Ascending aorta (tissue), 2 donors: ENCODE measurements at regions of chr3 and their contacts with region 1.

Region 1: DNA sequence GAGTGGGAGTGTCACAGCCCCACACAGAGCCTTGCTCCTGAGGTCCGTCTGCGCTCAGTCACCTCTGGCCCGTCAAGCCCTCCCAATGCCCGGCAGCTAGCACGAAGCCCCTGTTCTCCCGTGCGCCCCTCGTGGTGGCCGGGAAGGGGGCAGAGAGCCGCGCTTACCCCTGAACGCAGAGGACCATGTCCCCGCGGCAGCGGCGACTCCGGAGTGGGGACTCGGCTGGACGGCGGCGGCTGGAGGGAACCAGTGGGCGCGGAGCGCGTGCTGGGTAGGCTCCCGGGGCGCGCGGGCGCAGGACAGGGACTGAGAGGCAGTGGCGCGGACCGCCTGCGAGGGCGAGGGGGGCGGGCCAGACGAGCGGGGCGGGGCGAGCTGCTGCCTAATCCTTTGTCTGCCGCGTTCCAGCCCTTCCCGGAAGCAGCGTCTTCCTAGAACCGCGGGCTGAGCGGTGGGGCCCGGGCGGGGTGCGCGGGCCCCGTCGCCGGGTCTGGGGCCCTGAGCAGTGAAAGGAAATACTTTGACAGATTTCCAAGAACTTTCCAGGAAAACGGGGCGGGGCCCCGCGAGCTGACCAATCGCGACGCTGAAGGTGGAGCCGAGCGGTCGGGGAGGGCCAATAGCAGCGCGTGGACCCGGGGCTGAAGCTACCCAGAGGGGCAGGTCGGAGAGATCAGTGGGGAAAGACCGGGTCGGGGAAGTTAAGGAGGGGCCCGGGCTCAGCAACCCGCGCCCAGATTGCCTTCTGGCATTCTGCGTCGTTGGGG is at the start of gene CISH:
- DNase-seq: peak; percentile 80 to 97
- H3K4me3 ChIP-seq: peak within 1 kb of the TSS; percentile 74 to 76
- H3K27ac ChIP-seq: peak within 1 kb of the TSS; percentile 70 to 79
- H3K4me1 ChIP-seq: peaks cover 3 to 18% of the 10 kb centered on the region in 2 donors
- H3K27me3 ChIP-seq: no peaks in the 10 kb centered on the region
- CTCF ChIP-seq: peak in 2 of 3 experiments; percentile 35 to 39
- total RNA-seq, gene CISH: 6.1 TPM

Region 2: GRCh38 chr3:50358911-50359759 is 252.5 kb before region 1 on chr3 and contains the start of gene TMEM115:
- intact Hi-C with region 1: loop called (anchors 5 kb)
- DNase-seq: peak; percentile 96 to 99
- H3K4me3 ChIP-seq: peak within 1 kb of the TSS; percentile 87 to 92
- H3K27ac ChIP-seq: peak within 1 kb of the TSS; percentile 89 to 90
- H3K4me1 ChIP-seq: peaks cover 14 to 33% of the 10 kb centered on the region in 2 donors
- H3K27me3 ChIP-seq: no peaks in the 10 kb centered on the region
- CTCF ChIP-seq: no peak
- total RNA-seq, gene TMEM115: 55.7 TPM

Region 3: GRCh38 chr3:50405249-50405648 is 206.4 kb before region 1 on chr3:
- intact Hi-C with region 1: no loop called
- DNase-seq: no peak
- H3K4me3 ChIP-seq: no peak overlapping the region
- H3K27ac ChIP-seq: no peak overlapping the region
- H3K4me1 ChIP-seq: no peaks in the 10 kb centered on the region
- H3K27me3 ChIP-seq: no peaks in the 10 kb centered on the region
- CTCF ChIP-seq: no peak

Region 4: GRCh38 chr3:50568947-50569749 is 42.5 kb before region 1 on chr3 and contains the start of gene HEMK1:
- intact Hi-C with region 1: loop called (anchors 1 kb)
- DNase-seq: peak; percentile 90 to 99
- H3K4me3 ChIP-seq: peak within 1 kb of the TSS; percentile 74 to 89
- H3K27ac ChIP-seq: peak within 1 kb of the TSS; percentile 75 to 85
- H3K4me1 ChIP-seq: peaks cover 0 to 19% of the 10 kb centered on the region in 2 donors
- H3K27me3 ChIP-seq: no peaks in the 10 kb centered on the region
- CTCF ChIP-seq: no peak
- total RNA-seq, gene HEMK1: 13.1 TPM

Region 5: DNA sequence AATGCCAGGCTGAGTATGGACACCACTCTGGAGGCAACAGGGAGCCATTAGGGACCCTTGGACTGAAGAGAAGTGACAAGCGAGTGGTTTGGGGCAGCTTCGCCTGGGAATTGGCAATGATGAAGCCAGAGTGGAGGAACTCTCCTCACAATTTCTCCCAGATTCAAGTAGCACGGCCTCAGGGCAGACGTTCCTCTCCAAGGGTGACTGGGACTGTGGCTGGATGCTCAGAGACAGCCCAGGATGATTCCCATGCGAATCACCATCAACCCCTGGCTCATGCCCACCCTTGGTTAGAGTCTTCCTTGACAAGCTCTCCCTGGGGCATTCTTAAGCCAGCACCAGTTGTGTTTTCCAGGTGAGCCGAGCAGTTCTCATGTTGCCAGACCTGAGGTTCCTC is 46.8 kb after region 1 on chr3:
- intact Hi-C with region 1: no loop called
- DNase-seq: no peak
- H3K4me3 ChIP-seq: no peak overlapping the region
- H3K27ac ChIP-seq: no peak overlapping the region
- H3K4me1 ChIP-seq: no peaks in the 10 kb centered on the region
- H3K27me3 ChIP-seq: no peaks in the 10 kb centered on the region
- CTCF ChIP-seq: no peak

Region 6: GRCh38 chr3:50674349-50675178 is 62.9 kb after region 1 on chr3 and contains the start of gene DOCK3:
- intact Hi-C with region 1: loop called (anchors 2 kb)
- DNase-seq: peak in 1 of 2 donors; percentile 73
- H3K4me3 ChIP-seq: peak within 1 kb of the TSS; percentile 67
- H3K27ac ChIP-seq: no peak within 1 kb of the TSS
- H3K4me1 ChIP-seq: no peaks in the 10 kb centered on the region
- H3K27me3 ChIP-seq: no peaks in the 10 kb centered on the region
- CTCF ChIP-seq: no peak
- total RNA-seq, gene DOCK3: 3.9 TPM

Region 7: GRCh38 chr3:51371943-51372557 is 760.4 kb after region 1 on chr3:
- intact Hi-C with region 1: loop called (anchors 1 kb)
- DNase-seq: peak in 1 of 2 donors; percentile 75
- H3K4me3 ChIP-seq: no peak overlapping the region
- H3K27ac ChIP-seq: no peak overlapping the region
- H3K4me1 ChIP-seq: no peaks in the 10 kb centered on the region
- H3K27me3 ChIP-seq: no peaks in the 10 kb centered on the region
- CTCF ChIP-seq: peak; percentile 47 to 81 (median 63)

Region 8: DNA sequence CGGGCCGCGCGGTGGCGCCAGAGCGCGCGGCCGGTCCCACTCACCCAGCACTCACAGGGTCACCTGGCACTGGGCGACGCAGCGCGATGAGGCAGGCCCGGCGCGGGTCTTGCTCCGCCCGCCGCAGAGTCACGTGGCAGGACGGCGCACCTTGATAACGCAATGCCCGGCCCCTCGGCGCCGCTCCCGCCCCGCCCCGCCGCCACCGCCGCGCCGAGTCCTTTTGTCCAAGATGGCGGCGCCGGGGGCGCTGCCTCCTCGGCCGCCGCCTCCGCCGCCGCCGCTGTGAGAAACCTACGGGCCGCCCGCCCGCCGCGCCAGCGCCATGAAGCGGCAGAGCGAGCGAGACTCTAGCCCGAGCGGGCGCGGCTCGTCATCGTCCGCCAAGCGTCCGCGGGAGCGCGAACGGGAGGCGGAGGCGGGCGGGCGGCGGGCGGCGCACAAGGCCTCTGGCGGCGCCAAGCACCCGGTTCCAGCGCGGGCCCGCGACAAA is 779.5 kb after region 1 on chr3 and contains the start of gene RBM15B:
- intact Hi-C with region 1: loop called (anchors 1 kb)
- DNase-seq: peak; percentile 88 to 98
- H3K4me3 ChIP-seq: peak within 1 kb of the TSS; percentile 86 to 90
- H3K27ac ChIP-seq: peak within 1 kb of the TSS; percentile 81 to 89
- H3K4me1 ChIP-seq: peaks cover 18 to 58% of the 10 kb centered on the region in 2 donors
- H3K27me3 ChIP-seq: no peaks in the 10 kb centered on the region
- CTCF ChIP-seq: peak; percentile 88 to 90 (median 88)
- total RNA-seq, gene RBM15B: 33.0 TPM

Region 9: DNA sequence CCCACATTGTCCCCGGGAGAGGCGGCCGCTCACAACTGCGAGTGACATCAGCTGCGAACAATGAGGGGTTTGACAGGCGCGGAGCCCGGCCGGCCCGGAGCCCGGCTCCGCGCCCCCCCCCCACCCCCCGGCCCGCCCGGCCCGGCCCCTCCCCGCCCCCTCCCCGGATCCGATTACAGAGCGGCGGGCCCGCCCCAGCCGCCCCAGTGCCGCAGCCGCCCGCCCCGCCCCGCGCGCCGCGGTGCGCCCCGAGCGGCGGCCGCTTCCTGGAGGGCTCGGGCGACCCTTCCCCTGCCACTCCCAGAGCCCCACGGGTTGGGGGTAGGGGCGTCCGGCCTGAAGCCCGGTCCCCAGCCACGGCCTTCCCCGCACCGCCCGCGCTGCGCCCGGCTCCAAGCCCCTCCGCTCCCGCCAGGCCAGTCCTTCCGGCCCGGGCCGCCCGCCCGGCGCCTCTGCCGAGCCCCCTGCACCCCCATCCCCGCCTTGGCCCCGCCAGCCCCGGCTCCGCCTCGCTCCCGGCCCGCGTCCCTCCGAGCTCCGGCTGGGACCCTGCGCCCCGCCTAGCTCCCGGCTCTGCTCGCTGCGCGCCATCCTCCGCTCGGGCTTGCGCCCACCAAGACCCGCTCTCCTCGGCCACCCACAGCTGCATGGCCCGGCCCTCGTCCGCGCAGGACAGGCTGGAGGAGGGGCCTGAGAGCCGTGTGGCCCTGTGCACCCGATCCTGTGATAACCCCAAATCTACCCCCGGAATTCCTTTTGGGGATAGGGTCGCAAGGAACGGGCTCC is 1355.9 kb after region 1 on chr3 and contains the start of gene PCBP4:
- intact Hi-C with region 1: loop called (anchors 10 kb)
- DNase-seq: peak in 1 of 2 donors; percentile 89
- H3K4me3 ChIP-seq: peak within 1 kb of the TSS; percentile 87 to 90
- H3K27ac ChIP-seq: peak within 1 kb of the TSS; percentile 95 to 96
- H3K4me1 ChIP-seq: peaks cover 8 to 35% of the 10 kb centered on the region in 2 donors
- H3K27me3 ChIP-seq: no peaks in the 10 kb centered on the region
- CTCF ChIP-seq: no peak
- total RNA-seq, gene PCBP4: 256 TPM